ENCODE measurements at regions of chr22 and their contacts with region 1.

Region 1: DNA sequence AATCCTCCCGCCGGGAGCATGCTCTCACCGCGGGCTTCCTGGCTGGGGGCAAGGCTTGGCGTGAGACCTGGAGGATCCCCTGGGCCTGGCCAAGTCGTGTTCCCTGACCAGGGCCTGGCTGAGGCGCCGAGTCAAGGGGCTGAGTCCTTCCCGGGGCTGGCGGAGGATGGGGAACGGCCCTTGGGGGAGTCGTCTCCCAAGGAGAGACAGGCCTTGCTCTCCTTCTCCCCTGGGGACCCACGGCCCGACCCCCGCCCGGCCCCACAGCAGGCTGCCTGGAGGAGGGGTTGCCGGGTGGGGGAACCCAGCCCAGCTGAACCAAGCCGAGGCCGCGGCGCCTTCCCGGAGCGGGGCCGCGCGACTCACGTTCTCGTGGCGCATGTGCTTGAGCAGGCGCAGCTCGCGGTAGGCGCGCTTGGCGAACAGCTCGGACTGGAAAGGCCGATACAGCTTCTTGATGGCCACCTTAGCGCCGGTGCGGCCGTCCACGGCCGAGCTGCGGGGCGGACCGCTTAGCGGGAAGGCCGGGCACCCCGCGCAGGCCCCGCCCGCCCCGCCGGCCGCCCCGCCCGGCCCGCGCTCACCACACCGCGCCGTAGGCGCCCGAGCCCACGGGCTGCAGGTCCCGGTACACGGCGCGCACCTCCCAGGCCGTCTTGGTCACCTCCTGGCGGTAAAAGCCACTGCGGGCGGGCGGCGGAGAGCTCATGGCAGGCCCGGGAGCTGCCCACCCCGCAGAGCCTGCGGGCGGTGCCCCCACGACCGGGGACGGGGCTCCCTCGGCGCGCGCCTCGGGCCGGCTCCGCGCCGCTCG is 475 bp downstream of the MAPK12 start:
- DNase-seq: no peak
- H3K4me3 ChIP-seq: peak overlapping the region; percentile 68
- H3K27me3 ChIP-seq: no peaks in the 10 kb centered on the region
- CTCF ChIP-seq: no peak

Region 2: GRCh38 chr22:50250555-50251476 is 10.2 kb before region 1 on chr22 and contains the start of gene HDAC10:
- CTCF ChIA-PET with region 1: interaction called, 28 read pairs
- POLR2A ChIA-PET with region 1: no interaction called
- DNase-seq: no peak
- H3K4me3 ChIP-seq: peak within 1 kb of the TSS; percentile 65
- H3K27me3 ChIP-seq: no peaks in the 10 kb centered on the region
- CTCF ChIP-seq: no peak
- polyA plus RNA-seq, gene HDAC10: 8.8 and 18.2 TPM in 2 replicates